ENCODE measurements at regions of chr3 and their contacts with region 1.

Region 1: GRCh38 chr3:98039322-98040024 is 4.4 kb upstream of the GABRR3 start:
- DNase-seq: peak; percentile 78 to 80
- H3K4me3 ChIP-seq: peak overlapping the region; percentile 17
- H3K4me1 ChIP-seq: peaks cover 27% of the 10 kb centered on the region
- H3K27me3 ChIP-seq: peaks cover 3% of the 10 kb centered on the region; the same call in 1 of the 2 replicates

Region 2: DNA sequence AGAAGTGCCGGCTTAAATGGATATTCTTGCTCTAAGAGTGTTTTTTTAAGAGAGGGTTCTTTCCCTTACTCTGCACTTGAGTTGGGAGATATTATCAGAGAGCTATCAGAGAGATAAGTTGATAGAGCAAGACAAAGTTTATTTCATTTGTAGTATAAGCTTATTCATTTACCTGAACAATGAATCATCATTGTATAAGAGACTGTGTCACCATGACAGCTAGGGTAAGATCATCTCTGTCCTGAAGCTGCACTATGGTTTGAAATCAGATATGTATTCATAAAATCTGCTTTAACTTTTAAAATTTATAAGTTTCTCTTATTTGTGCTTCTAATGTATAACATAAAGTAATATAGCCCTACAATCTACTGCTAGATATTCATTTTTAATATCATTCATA is 403.0 kb before region 1 on chr3:
- in situ Hi-C with region 1: no loop called
- DNase-seq: no peak
- H3K4me3 ChIP-seq: no peak overlapping the region
- H3K4me1 ChIP-seq: no peaks in the 10 kb centered on the region
- H3K27me3 ChIP-seq: no peaks in the 10 kb centered on the region

Region 3: DNA sequence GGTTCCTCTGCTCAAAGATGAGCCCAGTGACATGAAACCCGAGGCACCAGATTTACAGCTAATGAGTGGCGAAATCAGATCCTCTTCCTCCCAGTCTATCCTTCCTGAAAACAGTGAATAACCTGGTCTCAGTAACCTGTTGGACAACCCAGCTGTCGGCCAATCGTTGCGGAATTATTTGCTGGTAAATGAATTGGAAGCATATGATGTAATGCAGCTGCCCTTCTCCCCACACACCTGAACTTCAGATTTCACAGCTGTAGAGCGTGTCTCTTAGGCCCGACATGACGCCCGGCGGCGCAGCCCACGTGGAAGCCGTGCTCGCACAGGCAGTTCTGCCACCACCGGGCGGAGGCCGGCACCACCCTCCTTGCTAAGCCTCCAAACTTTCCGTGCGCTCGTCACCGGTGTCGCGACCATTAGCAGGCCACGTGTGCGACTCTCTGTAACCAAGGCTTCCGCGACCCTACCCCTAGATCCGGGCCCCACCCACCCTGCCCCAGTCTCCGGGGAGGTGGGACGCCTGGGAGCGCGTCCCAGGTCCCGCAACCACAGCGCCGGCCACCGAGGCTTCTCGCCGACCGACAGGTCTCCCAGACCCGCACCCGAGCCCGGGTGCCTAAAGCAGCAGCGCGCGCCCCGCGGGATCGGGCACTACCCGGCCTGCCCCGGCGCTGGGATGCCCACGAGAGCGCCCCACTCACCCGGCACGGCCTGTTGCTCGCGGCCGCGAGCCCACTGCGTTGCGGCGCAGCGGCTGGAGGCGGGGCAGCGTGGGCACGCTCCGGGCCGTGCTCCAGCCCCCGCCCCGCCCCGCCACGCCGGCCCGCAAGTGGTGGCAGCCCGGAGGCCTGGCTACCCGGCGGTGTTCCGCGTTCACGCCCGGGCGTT is 67.6 kb before region 1 on chr3 and contains the start of gene RIOX2:
- in situ Hi-C with region 1: no loop called
- DNase-seq: peak; percentile 49 to 78
- H3K4me3 ChIP-seq: peak within 1 kb of the TSS; percentile 50
- H3K4me1 ChIP-seq: peaks cover 24% of the 10 kb centered on the region
- H3K27me3 ChIP-seq: no peaks in the 10 kb centered on the region

Region 4: DNA sequence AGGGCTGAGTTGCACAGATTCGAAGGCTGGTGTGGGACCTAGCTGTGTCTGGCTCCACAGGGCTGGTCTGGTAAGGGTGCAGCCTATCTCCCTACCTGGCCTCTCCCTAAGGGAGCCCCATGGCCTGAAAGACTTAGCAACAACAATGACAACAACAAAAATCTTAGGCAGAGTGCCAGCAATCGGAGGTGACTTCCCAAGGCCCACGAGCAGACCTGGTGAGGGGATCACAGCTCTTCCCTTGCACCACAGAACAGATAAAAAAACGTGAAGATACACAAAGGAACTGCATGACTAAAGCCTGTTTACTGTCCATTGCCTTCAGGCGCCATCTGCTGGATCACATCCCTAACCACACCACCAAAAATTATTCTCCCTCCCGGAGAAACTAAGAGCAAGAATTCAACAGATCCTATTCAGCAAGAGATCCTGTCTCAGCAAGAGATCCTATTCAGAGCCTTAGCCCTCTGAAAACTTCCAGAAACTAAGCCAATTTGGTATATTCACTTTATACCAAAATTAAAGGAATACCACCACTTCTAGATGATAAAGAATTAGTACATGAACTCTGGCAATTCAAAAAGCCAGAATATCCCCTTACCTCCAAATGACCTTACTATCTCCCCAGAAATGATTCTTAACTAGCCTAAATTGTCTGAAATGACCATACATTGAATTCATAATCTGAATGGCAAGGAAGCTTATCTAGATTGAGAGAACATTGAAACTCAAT is 290.1 kb after region 1 on chr3:
- in situ Hi-C with region 1: loop called (anchors 5 kb)
- DNase-seq: peak; percentile 62 to 66
- H3K4me3 ChIP-seq: no peak overlapping the region
- H3K4me1 ChIP-seq: no peaks in the 10 kb centered on the region
- H3K27me3 ChIP-seq: peaks cover 11% of the 10 kb centered on the region

Region 5: DNA sequence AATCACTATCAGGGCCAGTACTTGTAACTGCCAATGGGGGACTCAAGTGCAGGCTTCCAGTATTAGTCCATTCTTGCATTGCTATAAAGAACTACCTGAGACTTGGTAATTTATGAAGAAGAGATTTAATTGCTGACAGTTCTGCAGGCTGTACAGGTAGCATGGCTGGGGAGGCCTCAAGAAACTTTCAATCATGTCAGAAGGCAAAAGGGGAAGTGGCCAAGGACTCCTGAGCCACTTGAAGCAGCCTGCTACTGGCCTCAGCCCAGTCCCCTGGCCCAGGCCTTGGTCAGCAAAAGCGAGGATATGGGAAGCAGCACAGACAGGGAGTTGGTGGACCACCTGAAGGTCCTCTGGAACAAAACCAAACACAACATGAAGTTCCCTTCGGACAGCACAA is 394.3 kb after region 1 on chr3:
- in situ Hi-C with region 1: no loop called
- DNase-seq: no peak
- H3K4me3 ChIP-seq: no peak overlapping the region
- H3K4me1 ChIP-seq: no peaks in the 10 kb centered on the region
- H3K27me3 ChIP-seq: no peaks in the 10 kb centered on the region